Caco-2 (cell line): ENCODE measurements at regions of chr3 and their contacts with region 1.

Region 1: GRCh38 chr3:72818092-72818773 is 30.0 kb downstream of the SHQ1 start:
- DNase-seq: peak in 1 of 2 experiments; percentile 16
- H3K4me3 ChIP-seq: no peak overlapping the region
- H3K4me3 Mint-ChIP-seq: no peak overlapping the region
- H3K27ac Mint-ChIP-seq: no peak overlapping the region
- H3K4me1 ChIP-seq: peaks cover 27% of the 10 kb centered on the region
- H3K4me1 Mint-ChIP-seq: peaks cover 8% of the 10 kb centered on the region
- H3K27me3 ChIP-seq: no peaks in the 10 kb centered on the region
- H3K27me3 Mint-ChIP-seq: no peaks in the 10 kb centered on the region
- CTCF ChIP-seq: peak; percentile 46 to 61

Region 2: DNA sequence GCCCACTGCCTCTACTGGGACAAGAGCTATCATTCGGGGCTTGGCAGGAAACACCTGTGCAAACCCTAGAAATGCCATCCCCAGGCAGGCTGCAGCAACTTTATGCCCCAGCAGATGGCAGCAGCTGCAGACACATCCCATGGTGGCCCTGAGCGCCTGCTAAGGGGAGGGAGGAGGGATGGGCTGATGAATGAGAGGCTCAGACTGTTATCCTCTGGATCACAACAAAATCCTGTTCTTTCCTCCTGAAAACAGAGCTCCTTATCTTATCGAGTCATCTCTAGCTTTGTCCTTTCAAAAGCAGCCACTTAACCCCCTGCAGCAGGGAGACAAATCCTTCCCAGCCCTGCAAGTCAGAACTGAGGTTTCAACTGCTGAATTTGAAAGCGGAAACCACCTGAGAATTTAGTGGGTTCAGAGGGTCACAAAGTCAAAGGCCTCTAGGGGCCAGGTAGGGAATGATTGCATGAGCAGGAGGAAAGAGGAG is 942.7 kb before region 1 on chr3:
- CTCF ChIA-PET with region 1: interaction called, 4 read pairs
- POLR2A ChIA-PET with region 1: no interaction called
- intact Hi-C with region 1: loop called (anchors 1 kb)
- DNase-seq: peak; percentile 77 to 86
- H3K4me3 ChIP-seq: no peak overlapping the region
- H3K4me3 Mint-ChIP-seq: no peak overlapping the region
- H3K27ac Mint-ChIP-seq: no peak overlapping the region
- H3K4me1 ChIP-seq: 0 out of 2 replicates have a peak, but pooled peaks cover 3% of the 10 kb centered on the region
- H3K4me1 Mint-ChIP-seq: no peaks in the 10 kb centered on the region
- H3K27me3 ChIP-seq: no peaks in the 10 kb centered on the region
- H3K27me3 Mint-ChIP-seq: no peaks in the 10 kb centered on the region
- CTCF ChIP-seq: peak; percentile 59 to 88

Region 3: DNA sequence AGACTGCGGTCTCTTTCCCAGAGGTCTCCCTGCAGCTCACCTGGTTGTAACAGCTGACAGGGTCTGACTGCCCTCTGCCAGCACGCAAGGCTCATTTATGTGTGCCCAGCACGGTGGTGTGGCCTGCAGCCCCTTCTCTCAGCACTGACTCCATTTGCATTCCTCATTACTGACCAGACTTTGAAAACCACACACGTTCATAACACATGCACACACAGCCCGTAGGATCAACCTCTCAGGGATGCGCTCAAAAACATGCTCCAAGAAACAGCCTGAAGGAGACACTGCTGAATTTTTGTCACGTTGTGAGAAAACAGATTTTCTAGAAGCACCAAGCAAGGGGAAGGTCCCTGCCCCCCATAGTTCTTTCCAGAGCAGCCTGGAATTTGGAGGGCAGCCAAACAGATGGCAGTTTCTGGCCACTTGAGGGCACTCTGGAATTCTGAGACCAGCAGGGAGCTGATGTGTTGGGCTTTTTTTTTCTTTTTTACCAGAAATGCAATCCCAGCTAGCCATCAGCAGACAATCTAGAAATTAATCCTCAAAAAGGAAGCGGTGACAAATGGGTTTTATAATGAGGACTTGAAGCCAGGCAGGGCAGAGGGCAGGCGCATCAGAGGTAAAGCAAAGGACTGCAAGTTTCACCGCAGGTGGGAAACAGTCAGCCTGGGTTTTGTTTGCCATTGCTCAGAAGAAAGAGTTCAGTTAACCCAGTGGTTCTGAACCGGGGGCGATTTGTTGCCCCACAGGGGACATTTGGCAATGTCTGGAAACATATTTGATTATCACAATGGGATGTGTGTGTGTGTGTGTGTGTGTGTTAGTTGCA is 862.8 kb before region 1 on chr3:
- CTCF ChIA-PET with region 1: interaction called, 4 read pairs
- POLR2A ChIA-PET with region 1: no interaction called
- intact Hi-C with region 1: loop called (anchors 1 kb)
- DNase-seq: peak; percentile 45 to 49
- H3K4me3 ChIP-seq: no peak overlapping the region
- H3K4me3 Mint-ChIP-seq: no peak overlapping the region
- H3K27ac Mint-ChIP-seq: no peak overlapping the region
- H3K4me1 ChIP-seq: no peaks in the 10 kb centered on the region
- H3K4me1 Mint-ChIP-seq: no peaks in the 10 kb centered on the region
- H3K27me3 ChIP-seq: no peaks in the 10 kb centered on the region
- H3K27me3 Mint-ChIP-seq: peaks cover 12% of the 10 kb centered on the region
- CTCF ChIP-seq: peak; percentile 64 to 84

Region 4: GRCh38 chr3:72391659-72392058 is 426.6 kb before region 1 on chr3:
- CTCF ChIA-PET with region 1: no interaction called
- POLR2A ChIA-PET with region 1: no interaction called
- intact Hi-C with region 1: no loop called
- DNase-seq: no peak
- H3K4me3 ChIP-seq: no peak overlapping the region
- H3K4me3 Mint-ChIP-seq: no peak overlapping the region
- H3K27ac Mint-ChIP-seq: no peak overlapping the region
- H3K4me1 ChIP-seq: peaks cover 57% of the 10 kb centered on the region
- H3K4me1 Mint-ChIP-seq: peaks cover 23% of the 10 kb centered on the region
- H3K27me3 ChIP-seq: no peaks in the 10 kb centered on the region
- H3K27me3 Mint-ChIP-seq: no peaks in the 10 kb centered on the region
- CTCF ChIP-seq: no peak

Region 5: GRCh38 chr3:72447059-72447946 is 370.9 kb before region 1 on chr3:
- CTCF ChIA-PET with region 1: interaction called, 4 read pairs
- POLR2A ChIA-PET with region 1: no interaction called
- intact Hi-C with region 1: loop called (anchors 2 kb)
- DNase-seq: peak; percentile 88 to 96
- H3K4me3 ChIP-seq: peak overlapping the region; percentile 92
- H3K4me3 Mint-ChIP-seq: peak overlapping the region; percentile 99
- H3K27ac Mint-ChIP-seq: peak overlapping the region; percentile 87
- H3K4me1 ChIP-seq: peaks cover 35% of the 10 kb centered on the region
- H3K4me1 Mint-ChIP-seq: peaks cover 47% of the 10 kb centered on the region
- H3K27me3 ChIP-seq: no peaks in the 10 kb centered on the region
- H3K27me3 Mint-ChIP-seq: no peaks in the 10 kb centered on the region
- CTCF ChIP-seq: no peak

Region 6: GRCh38 chr3:72722930-72723726 is 95.1 kb before region 1 on chr3:
- CTCF ChIA-PET with region 1: no interaction called
- POLR2A ChIA-PET with region 1: no interaction called
- intact Hi-C with region 1: loop called (anchors 10 kb)
- DNase-seq: no peak
- H3K4me3 ChIP-seq: no peak overlapping the region
- H3K4me3 Mint-ChIP-seq: no peak overlapping the region
- H3K27ac Mint-ChIP-seq: peak overlapping the region; percentile 26
- H3K4me1 ChIP-seq: peaks cover 14% of the 10 kb centered on the region
- H3K4me1 Mint-ChIP-seq: peaks cover 33% of the 10 kb centered on the region
- H3K27me3 ChIP-seq: no peaks in the 10 kb centered on the region
- H3K27me3 Mint-ChIP-seq: no peaks in the 10 kb centered on the region
- CTCF ChIP-seq: no peak